ENCODE measurements at regions of chr10 and their contacts with region 1.

Region 1: DNA sequence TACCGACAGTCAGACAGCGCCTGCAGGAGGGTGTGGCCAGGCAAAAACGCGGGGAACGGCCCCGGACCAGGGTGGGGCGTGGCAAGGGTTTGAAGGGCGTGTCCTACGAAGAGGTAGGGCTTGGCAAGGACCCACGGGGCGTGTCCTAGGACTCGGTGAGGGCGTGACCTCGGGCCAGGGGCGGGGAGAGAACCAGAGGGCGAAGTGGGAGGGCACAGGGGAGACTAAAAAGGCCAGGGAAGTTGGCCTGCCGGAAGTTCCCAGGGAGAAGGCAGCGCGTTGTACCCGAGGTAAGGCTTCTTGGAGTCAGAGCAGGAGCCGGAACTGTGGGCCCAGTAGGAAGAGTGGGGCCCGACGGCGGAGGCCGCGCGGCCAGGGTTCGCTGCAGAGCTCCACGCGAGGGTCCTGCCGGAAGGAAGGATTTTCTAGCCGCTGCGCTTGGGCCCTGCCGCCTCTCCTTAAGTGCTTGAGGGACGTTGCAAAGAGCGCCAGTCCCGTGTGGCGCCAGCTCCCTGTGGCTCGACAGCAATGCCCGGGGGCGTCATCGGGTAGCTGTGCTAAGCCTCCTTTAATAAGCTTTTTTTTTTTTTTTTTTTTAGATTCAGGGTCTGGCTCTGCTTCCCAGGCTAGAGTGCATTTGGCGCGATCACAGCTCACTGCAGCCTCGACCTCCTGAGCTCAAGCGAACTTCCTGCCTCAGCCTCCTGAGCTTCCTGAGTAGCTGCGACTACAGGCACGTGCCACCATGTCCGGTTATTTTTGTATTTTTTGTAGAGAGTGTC is at the start of gene PTER:
- DNase-seq: peak; percentile 97 to 99
- ATAC-seq: peak; percentile 99 to 100 (median 100)
- H3K4me3 ChIP-seq: peak within 1 kb of the TSS; percentile 36 to 90 (median 67)
- H3K27ac ChIP-seq: peak within 1 kb of the TSS; percentile 64 to 92 (median 88)
- H3K4me1 ChIP-seq: peaks cover 0 to 51% (median 36%) of the 10 kb centered on the region in 9 donors
- H3K27me3 ChIP-seq: peaks cover 0 to 3% (median 0%) of the 10 kb centered on the region in 7 donors
- CTCF ChIP-seq: peak in 1 of 9 donors; percentile 7
- total RNA-seq, gene PTER: 8.9 to 21.4 (median 14.7) TPM

Region 2: DNA sequence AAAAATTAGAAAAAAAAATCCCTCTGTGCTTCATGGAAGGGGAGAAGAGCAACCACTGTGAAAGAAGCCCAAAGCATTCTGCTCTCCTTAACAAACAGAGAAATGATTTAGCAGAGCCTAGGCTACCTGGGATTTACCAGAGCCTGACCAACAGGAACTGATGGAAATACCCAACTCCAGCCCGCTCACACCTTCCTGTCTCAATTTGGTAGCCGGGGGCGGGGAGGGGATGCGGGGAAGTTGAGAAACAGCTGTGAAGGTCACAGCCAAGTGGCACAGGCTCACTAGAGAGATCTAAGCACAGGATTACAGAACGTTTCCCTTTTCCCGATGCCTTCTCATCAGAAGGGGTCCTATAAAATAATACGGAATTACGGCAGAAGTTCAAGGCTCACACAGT is 362.7 kb after region 1 on chr10:
- intact Hi-C with region 1: loop called in 1 of 10 experiments (anchors 5 kb)
- DNase-seq: no peak
- ATAC-seq: peak in 6 of 8 donors; percentile 20 to 81 (median 45)
- H3K4me3 ChIP-seq: no peak overlapping the region
- H3K27ac ChIP-seq: no peak overlapping the region
- H3K4me1 ChIP-seq: peaks cover 6 to 46% (median 27%) of the 10 kb centered on the region in 9 donors
- H3K27me3 ChIP-seq: no peaks in the 10 kb centered on the region
- CTCF ChIP-seq: no peak

Region 3: DNA sequence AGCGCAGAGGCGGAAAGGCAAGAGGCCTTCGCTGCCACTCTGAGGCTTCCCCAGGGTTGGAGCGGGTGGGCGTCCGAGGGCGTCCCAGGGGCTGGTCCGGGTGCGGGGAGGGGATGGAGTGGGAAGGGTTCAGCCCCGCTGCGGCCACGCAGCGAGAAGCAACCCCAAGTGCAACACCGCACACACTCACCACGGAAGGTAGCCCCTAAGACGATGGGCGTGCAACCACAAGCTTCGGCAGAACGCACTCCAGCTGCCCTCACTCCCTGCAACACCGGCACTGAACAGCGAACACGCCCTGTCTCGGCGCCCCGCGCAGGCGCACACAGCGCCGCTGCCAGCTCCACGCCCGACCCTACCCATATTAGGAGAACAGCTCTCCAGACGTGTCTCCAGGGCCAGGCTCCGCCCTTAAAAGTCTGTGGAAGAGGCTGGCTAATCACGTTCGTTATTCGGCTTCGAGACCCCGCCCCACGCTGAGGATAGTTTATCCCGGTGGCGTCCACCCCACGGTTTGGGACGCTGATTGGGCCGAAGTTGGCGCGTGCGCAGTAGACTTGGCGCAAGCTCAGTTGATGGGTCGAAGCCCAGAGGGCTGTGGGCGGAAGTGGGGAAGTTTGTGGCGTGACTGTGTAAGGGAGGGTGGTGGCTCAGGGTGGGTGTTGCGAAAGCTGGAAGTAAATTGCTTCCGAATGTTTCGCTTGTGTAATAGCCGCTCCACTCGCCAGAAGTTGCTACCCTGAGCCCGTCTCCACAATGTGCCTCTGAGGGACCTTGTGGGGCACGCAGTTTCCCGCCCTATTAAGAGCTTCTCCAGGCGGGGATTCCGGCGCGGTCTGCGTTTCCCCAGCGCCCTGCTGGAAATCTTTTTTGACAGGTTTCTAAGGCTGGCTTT is 380.4 kb after region 1 on chr10 and contains the start of gene RSU1:
- intact Hi-C with region 1: loop called in 1 of 10 experiments (anchors 10 kb)
- DNase-seq: peak; percentile 100
- ATAC-seq: peak; percentile 97 to 100 (median 98)
- H3K4me3 ChIP-seq: peak within 1 kb of the TSS; percentile 64 to 81 (median 76)
- H3K27ac ChIP-seq: peak within 1 kb of the TSS; percentile 49 to 97 (median 90)
- H3K4me1 ChIP-seq: peaks cover 4 to 50% (median 29%) of the 10 kb centered on the region in 9 donors
- H3K27me3 ChIP-seq: no peaks in the 10 kb centered on the region
- CTCF ChIP-seq: no peak
- total RNA-seq, gene RSU1: 36.8 to 72.5 (median 48.3) TPM

Measured in heart right ventricle (tissue), 16 donors.